ENCODE measurements at regions of chr20 and their contacts with region 1.

Region 1: DNA sequence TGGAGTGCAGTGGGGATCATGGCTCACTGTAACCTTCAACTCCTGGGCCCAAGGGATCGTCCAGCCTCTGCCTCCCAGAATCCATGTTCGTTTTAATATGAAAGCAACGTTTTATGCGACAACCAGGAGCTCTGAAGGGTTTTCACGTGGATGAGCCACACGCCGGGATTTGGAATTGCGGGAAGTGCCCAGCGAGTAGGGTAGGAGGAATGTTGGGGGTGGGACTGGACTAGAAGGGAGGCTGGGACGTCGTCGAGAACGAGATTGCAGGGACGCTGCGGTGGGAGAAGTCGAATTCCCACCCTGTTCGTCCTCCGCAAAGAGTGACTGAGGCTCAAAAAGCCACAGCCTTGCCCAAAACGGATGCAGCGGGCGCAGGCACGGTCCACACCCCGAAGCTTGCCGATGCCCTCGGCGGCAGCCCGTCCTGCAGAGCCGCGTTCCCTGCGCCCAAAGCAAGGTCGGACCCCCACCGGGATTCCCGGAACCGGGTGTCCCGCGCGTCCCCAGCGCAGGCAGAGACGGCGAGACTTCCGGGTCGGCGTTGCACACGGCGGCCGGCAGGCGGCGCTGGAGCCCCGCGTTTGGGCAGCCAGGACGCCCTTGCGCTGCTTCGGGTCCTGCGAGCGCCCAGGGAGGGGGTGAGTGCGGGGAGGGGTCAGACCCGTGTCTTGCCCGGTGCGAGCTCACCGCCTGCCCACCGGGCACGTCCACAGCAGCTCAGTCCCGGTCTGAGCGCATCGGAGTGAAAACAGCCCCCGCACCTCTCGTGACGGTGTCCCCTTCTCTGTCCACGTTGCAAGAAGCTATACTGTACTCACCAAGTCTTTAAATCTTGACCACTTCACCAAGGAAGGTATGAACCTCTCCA is 87.8 kb downstream of the DHX35 start:
- DNase-seq: peak; percentile 82 to 89
- ATAC-seq: peak; percentile 84 to 94 (median 91)
- H3K4me3 ChIP-seq: peak overlapping the region; percentile 73
- H3K4me3 Mint-ChIP-seq: peak overlapping the region; percentile 75
- H3K27ac ChIP-seq: peak overlapping the region; percentile 15
- H3K27ac Mint-ChIP-seq: peak overlapping the region in 1 of 2 donors; percentile 81
- H3K4me1 ChIP-seq: peaks cover 16% of the 10 kb centered on the region
- H3K4me1 Mint-ChIP-seq: no peaks in the 10 kb centered on the region
- H3K27me3 ChIP-seq: no peaks in the 10 kb centered on the region
- H3K27me3 Mint-ChIP-seq: peaks cover 7 to 13% of the 10 kb centered on the region in 2 donors
- CTCF ChIP-seq: peak; percentile 99

Region 2: DNA sequence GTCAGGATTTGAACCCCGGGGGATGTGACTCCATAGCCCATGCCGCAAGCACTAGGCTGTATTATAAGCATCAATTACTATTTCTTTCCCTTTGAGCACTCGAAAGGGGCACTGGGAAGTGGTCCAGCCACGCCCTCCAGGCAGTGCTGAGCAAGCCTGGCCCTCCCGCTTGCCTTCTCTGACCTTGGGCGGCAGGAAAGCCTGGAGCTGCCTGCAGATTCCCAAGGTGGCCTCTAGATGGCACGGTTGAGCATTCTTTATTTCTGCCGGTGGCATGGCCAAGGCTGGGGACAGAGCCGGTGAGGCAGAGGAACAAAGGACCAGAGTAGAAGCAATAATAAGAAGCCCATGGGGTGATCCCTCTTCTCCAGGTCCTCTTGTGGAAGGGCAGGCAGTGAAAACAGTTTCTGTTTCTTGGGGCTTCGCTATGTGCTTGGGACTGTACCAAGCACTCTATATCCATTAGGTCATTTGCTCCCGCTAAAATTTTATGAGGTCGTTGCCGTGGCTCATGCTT is 416.3 kb before region 1 on chr20:
- intact Hi-C with region 1: loop called (anchors 5 kb)
- DNase-seq: peak; percentile 40 to 76
- ATAC-seq: peak; percentile 82 to 99 (median 95)
- H3K4me3 ChIP-seq: no peak overlapping the region
- H3K4me3 Mint-ChIP-seq: no peak overlapping the region
- H3K27ac ChIP-seq: no peak overlapping the region
- H3K27ac Mint-ChIP-seq: no peak overlapping the region
- H3K4me1 ChIP-seq: no peaks in the 10 kb centered on the region
- H3K4me1 Mint-ChIP-seq: peaks cover 0 to 6% of the 10 kb centered on the region in 2 donors
- H3K27me3 ChIP-seq: no peaks in the 10 kb centered on the region
- H3K27me3 Mint-ChIP-seq: peaks cover 16 to 21% of the 10 kb centered on the region in 2 donors
- CTCF ChIP-seq: peak; percentile 93

Region 3: GRCh38 chr20:39070484-39071231 is 20.7 kb after region 1 on chr20:
- intact Hi-C with region 1: no loop called
- DNase-seq: no peak
- ATAC-seq: no peak
- H3K4me3 ChIP-seq: no peak overlapping the region
- H3K4me3 Mint-ChIP-seq: no peak overlapping the region
- H3K27ac ChIP-seq: no peak overlapping the region
- H3K27ac Mint-ChIP-seq: no peak overlapping the region
- H3K4me1 ChIP-seq: no peaks in the 10 kb centered on the region
- H3K4me1 Mint-ChIP-seq: no peaks in the 10 kb centered on the region
- H3K27me3 ChIP-seq: no peaks in the 10 kb centered on the region
- H3K27me3 Mint-ChIP-seq: peaks cover 6 to 33% of the 10 kb centered on the region in 2 donors
- CTCF ChIP-seq: no peak

Region 4: DNA sequence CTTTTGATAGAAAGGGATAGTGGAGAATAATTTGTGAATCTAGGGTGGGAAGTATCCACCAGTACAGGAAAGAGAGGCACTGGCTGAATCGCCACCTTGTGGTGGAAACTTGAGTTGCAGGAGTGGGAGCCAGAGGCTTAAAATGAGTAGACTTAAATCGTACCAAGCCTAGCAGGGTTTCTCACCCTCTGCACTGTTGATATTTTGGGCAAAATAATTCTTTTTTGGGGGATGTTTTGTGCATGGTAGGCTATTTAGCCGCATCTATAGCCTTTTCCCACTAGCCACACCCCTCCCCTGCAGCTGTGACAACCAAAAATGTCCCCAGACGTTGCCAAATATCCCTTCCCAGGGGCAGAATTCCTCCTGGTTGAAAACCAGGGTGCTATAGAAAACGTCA is 31.3 kb after region 1 on chr20:
- intact Hi-C with region 1: loop called (anchors 1 kb)
- DNase-seq: peak; percentile 76 to 87
- ATAC-seq: peak; percentile 67 to 74 (median 70)
- H3K4me3 ChIP-seq: no peak overlapping the region
- H3K4me3 Mint-ChIP-seq: no peak overlapping the region
- H3K27ac ChIP-seq: no peak overlapping the region
- H3K27ac Mint-ChIP-seq: no peak overlapping the region
- H3K4me1 ChIP-seq: peaks cover 22% of the 10 kb centered on the region
- H3K4me1 Mint-ChIP-seq: peaks cover 24 to 33% of the 10 kb centered on the region in 2 donors
- H3K27me3 ChIP-seq: no peaks in the 10 kb centered on the region
- H3K27me3 Mint-ChIP-seq: peaks cover 0 to 6% of the 10 kb centered on the region in 2 donors
- CTCF ChIP-seq: peak; percentile 94